Gastrocnemius medialis (tissue), 4 donors: ENCODE measurements at regions of chr1 and their contacts with region 1.

Region 1: DNA sequence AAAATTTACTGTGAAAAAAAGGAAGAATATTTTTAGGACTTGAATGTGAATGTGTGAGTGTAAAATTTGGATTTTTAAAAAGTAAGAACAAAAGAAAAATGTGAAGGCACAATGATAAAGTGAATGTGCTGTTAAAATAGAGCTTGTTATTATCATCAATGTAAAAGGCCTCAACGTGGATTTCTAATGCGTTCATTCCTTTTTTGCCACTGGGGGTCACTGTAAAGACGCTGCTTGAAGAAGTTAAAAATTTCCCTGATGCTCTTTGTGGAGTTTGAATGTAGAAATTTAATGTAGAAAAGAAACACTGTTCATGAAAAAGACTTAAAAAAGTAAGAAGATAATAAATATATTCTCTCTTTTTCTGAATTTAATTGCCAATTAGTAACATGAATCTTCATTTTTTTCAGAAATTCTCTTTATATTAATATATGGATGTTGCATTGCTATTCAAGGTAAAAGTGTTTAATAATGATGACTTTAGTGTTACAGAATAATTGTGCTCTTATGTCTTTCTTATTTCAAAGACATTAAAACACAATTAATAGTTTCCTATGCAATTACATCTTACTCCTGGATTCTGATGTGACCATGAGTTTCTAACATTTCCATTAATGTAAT is 161.5 kb downstream of the DNM3 start:
- DNase-seq: no peak
- ATAC-seq: no peak
- H3K4me3 ChIP-seq: no peak overlapping the region
- H3K27ac ChIP-seq: no peak overlapping the region
- H3K4me1 ChIP-seq: no peaks in the 10 kb centered on the region
- H3K27me3 ChIP-seq: no peaks in the 10 kb centered on the region
- CTCF ChIP-seq: peak in 2 of 5 experiments; percentile 46 to 50
- POLR2A ChIP-seq: no peak

Region 2: DNA sequence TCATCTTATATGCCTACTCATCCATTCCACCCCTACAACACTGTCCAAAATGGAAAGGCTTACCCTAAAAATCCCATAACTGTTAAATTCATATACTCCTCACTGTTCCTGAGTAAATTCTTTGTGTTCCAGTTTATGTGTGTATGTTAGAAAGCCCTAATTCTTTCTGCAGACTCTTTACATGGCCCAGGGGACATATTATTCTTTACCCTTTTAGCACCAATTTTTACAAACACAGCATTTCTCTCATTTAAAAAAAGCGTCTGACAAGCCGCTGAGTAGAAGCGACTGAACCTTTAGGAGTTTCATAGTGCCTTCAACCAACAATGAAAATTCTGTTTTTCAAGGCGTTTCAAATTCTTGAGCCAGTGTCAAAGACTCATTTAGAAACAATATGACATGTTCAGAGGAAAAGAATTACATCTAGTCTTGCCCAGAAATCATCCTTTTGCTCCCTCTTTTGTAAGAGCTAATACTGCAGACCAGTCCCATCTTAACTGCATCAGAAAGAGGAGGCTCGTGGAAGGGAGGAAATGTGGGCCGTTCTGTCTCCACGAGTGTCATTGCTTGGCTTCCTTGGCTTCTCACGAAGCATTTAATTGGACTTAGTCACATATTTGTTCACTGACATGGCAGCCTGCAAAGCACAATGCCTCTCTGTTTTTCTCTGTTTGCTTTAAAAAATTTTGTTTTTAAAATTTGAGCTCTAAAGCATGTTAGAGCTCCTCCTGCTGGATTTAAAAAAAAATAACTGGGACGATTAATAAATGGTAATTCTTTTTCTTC is 396.3 kb after region 1 on chr1:
- in situ Hi-C with region 1: loop called in 2 of 4 experiments (anchors 25 kb)
- intact Hi-C with region 1: loop called (anchors 10 kb)
- DNase-seq: peak; percentile 34 to 61
- ATAC-seq: peak; percentile 83 to 90
- H3K4me3 ChIP-seq: peak overlapping the region in 1 of 4 donors; percentile 20
- H3K27ac ChIP-seq: peak overlapping the region; percentile 37 to 60 (median 45)
- H3K4me1 ChIP-seq: peaks cover 4 to 13% of the 10 kb centered on the region in 2 donors
- H3K27me3 ChIP-seq: no peaks in the 10 kb centered on the region
- CTCF ChIP-seq: peak in 4 of 5 experiments; percentile 21 to 50 (median 38)
- POLR2A ChIP-seq: no peak